Activated naive CD4-positive, alpha-beta T cell treated with anti-CD3 and anti-CD28 coated beads for 36 hours (primary cell): ENCODE measurements at regions of chr14 and their contacts with region 1.

Region 1: DNA sequence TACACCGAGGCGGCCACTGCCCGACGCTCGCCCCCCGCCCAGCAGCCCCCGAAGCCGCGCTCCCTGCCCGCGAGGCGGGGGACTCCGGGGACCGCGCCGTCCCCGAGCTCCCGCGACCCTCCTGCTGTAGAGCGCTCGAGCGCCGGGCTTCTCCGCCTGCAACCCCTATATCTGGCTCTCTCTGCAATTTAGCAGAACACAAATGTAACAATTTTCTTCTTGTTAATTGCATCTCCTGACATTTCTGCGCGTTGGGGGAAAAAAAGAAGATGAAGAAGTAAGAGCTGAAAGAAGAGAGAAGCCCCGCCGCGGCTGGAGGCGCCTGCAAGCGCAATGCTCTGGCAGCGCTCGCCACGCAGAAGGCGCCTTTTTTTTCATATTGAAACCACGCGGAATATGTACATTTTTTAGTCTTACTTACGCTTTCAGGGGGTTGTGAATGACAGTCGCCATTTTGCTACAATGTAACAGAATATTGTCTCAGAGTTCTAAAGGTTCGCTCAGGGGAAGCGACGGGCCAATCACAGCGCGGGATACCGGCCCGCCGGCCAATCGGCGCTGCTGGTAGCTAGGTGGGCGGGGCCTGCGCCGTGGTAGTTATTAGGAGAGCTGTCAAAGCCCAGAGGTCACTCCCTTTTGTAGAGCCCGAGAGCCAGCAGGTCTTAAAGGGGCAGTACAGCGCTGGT is at the start of gene DPF3:
- DNase-seq: peak; percentile 91
- H3K4me3 Mint-ChIP-seq: peak within 1 kb of the TSS; percentile 87
- H3K27ac Mint-ChIP-seq: peak within 1 kb of the TSS; percentile 46
- H3K4me1 Mint-ChIP-seq: peaks cover 18% of the 10 kb centered on the region
- H3K27me3 Mint-ChIP-seq: peaks cover 50% of the 10 kb centered on the region
- total RNA-seq, gene DPF3: 0.29 to 0.47 TPM

Region 2: DNA sequence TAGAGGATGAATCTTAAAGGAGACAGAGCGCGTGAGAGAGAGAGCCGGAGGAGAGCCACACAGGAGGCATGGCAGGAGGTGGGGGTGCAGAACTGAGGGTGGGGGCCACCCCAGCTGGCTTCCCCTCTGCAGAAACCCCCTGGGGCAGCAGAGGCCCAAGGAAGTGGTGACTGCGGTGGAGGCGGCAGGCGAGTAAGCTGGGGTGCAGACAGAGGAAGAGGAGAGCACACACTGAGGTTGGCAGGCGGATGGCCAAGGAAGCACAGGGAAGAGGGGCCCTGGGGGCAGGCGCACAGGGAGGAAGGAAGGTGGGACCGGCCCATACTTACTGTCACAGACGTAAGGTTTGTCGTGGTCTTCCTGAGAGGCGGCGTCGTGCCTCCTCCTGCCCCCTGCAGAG is 179.7 kb before region 1 on chr14:
- CTCF ChIA-PET with region 1: no interaction called
- intact Hi-C with region 1: loop called (anchors 10 kb)
- DNase-seq: peak; percentile 81
- H3K4me3 Mint-ChIP-seq: no peak overlapping the region
- H3K27ac Mint-ChIP-seq: no peak overlapping the region
- H3K4me1 Mint-ChIP-seq: peaks cover 26% of the 10 kb centered on the region
- H3K27me3 Mint-ChIP-seq: no peaks in the 10 kb centered on the region

Region 3: GRCh38 chr14:72810201-72810600 is 83.6 kb before region 1 on chr14:
- CTCF ChIA-PET with region 1: interaction called, 3 read pairs
- intact Hi-C with region 1: loop called (anchors 1 kb)
- DNase-seq: peak; percentile 86
- H3K4me3 Mint-ChIP-seq: no peak overlapping the region
- H3K27ac Mint-ChIP-seq: peak overlapping the region; percentile 91
- H3K4me1 Mint-ChIP-seq: peaks cover 23% of the 10 kb centered on the region
- H3K27me3 Mint-ChIP-seq: no peaks in the 10 kb centered on the region

Region 4: GRCh38 chr14:72904840-72905561 is 11.2 kb after region 1 on chr14:
- CTCF ChIA-PET with region 1: interaction called, 12 read pairs
- intact Hi-C with region 1: loop called (anchors 1 kb)
- DNase-seq: peak; percentile 76
- H3K4me3 Mint-ChIP-seq: no peak overlapping the region
- H3K27ac Mint-ChIP-seq: no peak overlapping the region
- H3K4me1 Mint-ChIP-seq: no peaks in the 10 kb centered on the region
- H3K27me3 Mint-ChIP-seq: peaks cover 10% of the 10 kb centered on the region